SK-N-SH (cell line): ENCODE measurements at regions of chr17 and their contacts with region 1.

Region 1: DNA sequence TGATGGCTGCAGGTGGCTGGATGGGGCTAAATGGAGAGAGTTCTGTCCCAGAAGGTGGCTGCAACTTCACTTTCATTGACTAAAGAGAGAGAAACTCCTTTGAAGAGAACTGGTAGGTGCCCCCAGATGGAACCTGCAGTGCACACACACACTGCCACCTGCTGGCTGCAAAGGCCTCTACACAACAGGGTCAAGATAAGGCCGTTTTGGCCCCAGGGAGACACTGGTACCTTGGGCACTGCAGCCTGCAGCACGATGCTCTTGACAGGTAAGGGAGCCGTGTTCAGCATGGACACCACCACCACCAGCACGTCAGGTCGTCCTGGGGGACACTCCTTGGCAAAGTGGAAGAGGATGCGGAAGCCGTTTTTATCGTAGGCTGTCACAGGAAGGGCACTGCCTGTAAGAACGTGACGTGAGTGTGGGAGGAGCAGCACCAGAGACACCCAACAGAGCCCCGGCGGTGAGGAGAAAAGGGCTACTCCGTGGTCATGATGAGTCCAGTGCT is 22.7 kb downstream of the GGA3 start:
- DNase-seq: peak; percentile 90
- H3K4me3 ChIP-seq: no peak overlapping the region
- H3K27ac ChIP-seq: no peak overlapping the region
- H3K4me1 ChIP-seq: no peaks in the 10 kb centered on the region; a peak in 1 of 4 replicates
- H3K27me3 ChIP-seq: no peaks in the 10 kb centered on the region
- CTCF ChIP-seq: peak; percentile 98
- EP300 ChIP-seq: no peak
- RAD21 ChIP-seq: peak; percentile 54

Region 2: GRCh38 chr17:75228305-75228704 is 10.4 kb before region 1 on chr17:
- CTCF ChIA-PET with region 1: interaction called, 136 read pairs
- POLR2A ChIA-PET with region 1: interaction called, 3 read pairs
- DNase-seq: no peak
- H3K4me3 ChIP-seq: no peak overlapping the region
- H3K27ac ChIP-seq: no peak overlapping the region
- H3K4me1 ChIP-seq: no peaks in the 10 kb centered on the region
- H3K27me3 ChIP-seq: no peaks in the 10 kb centered on the region
- CTCF ChIP-seq: no peak
- EP300 ChIP-seq: no peak
- RAD21 ChIP-seq: no peak

Region 3: GRCh38 chr17:75250009-75250471 is 11.3 kb after region 1 on chr17:
- CTCF ChIA-PET with region 1: interaction called, 51 read pairs
- POLR2A ChIA-PET with region 1: no interaction called
- DNase-seq: no peak
- H3K4me3 ChIP-seq: no peak overlapping the region
- H3K27ac ChIP-seq: no peak overlapping the region
- H3K4me1 ChIP-seq: peaks cover 0 to 4% of the 10 kb centered on the region in 2 experiments; a peak in 1 of 4 replicates
- H3K27me3 ChIP-seq: no peaks in the 10 kb centered on the region
- CTCF ChIP-seq: no peak
- EP300 ChIP-seq: no peak
- RAD21 ChIP-seq: no peak

Region 4: GRCh38 chr17:75338335-75338734 is 99.6 kb after region 1 on chr17:
- CTCF ChIA-PET with region 1: interaction called, 10 read pairs
- POLR2A ChIA-PET with region 1: no interaction called
- DNase-seq: no peak
- H3K4me3 ChIP-seq: no peak overlapping the region
- H3K27ac ChIP-seq: peak overlapping the region in 1 of 2 experiments; percentile 19; a peak in 1 of 4 replicates
- H3K4me1 ChIP-seq: peaks cover 6 to 9% of the 10 kb centered on the region in 2 experiments; a peak in 3 of 4 replicates
- H3K27me3 ChIP-seq: no peaks in the 10 kb centered on the region
- CTCF ChIP-seq: no peak
- EP300 ChIP-seq: no peak
- RAD21 ChIP-seq: no peak